RWPE1 (cell line): ENCODE measurements at regions of chr7 and their contacts with region 1.

Region 1: DNA sequence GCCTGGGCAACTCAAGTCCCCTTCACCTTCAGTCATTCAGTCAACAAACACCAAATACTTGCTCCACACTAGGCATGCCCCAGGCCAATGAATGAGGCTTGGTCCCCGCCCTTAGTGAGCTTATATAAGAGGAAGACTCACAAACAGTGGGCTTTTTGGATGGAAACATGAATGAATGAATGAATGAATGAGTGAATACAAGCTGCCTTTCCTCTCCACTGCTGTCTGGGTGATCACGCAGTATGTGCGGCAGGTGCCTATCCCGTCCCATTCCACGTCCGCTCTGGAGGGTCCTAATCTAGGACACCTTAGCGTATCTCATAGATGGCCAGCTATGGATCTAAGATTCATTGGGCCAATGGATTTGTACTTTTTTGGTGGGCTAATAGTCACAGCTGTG is 19.8 kb upstream of the GTF2I start:
- DNase-seq: no peak
- H3K27ac ChIP-seq: no peak overlapping the region
- CTCF ChIP-seq: no peak

Region 2: GRCh38 chr7:74656837-74657691 is 19.3 kb after region 1 on chr7:
- CTCF ChIA-PET with region 1: interaction called, 10 read pairs
- POLR2A ChIA-PET with region 1: no interaction called
- DNase-seq: peak; percentile 90
- H3K27ac ChIP-seq: peak overlapping the region; percentile 98
- CTCF ChIP-seq: peak; percentile 15; the same call in 1 of the 2 replicates

Region 3: GRCh38 chr7:74709880-74710671 is 72.3 kb after region 1 on chr7:
- CTCF ChIA-PET with region 1: no interaction called
- POLR2A ChIA-PET with region 1: no interaction called
- DNase-seq: no peak
- H3K27ac ChIP-seq: no peak overlapping the region
- CTCF ChIP-seq: no peak